Activated CD4-positive, alpha-beta memory T cell treated with anti-CD3 and anti-CD28 coated beads for 36 hours (primary cell): ENCODE measurements at regions of chr3 and their contacts with region 1.

Region 1: DNA sequence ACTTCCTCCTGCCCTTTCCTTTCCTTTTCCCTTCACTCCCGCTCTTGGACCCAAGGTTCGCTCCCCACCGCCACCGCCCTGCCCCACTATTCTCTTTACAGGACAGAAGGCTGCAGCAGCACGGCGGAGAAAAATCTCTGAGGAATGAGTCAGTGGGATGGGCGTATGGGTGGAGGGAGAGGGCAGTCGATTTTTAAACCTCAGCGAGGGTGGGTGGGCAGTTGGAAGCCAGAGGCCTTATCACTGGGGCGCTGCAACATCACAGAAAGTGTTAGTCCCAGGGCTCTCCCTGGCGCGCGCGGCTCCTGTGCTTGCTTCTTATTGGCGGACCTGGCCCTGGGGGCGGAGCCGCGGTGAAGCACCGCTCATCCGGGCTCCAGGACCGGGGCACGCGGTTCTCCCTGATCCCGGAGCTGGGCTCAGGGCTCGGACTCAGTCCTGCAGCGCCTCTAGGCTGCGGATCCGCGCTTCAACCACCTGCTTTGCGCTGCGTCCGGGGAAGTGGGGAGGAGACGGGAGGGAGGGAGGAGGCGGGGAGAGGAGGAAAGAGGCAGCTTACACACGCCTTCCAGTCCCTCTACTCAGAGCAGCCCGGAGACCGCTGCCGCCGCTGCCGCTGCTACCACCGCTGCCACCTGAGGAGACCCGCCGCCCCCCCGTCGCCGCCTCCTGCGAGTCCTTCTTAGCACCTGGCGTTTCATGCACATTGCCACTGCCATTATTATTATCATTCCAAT is at the start of gene ALCAM:
- DNase-seq: peak; percentile 91
- H3K4me3 Mint-ChIP-seq: peak within 1 kb of the TSS; percentile 84
- H3K27ac Mint-ChIP-seq: peak within 1 kb of the TSS; percentile 97
- H3K4me1 Mint-ChIP-seq: peaks cover 28% of the 10 kb centered on the region
- H3K27me3 Mint-ChIP-seq: peaks cover 24% of the 10 kb centered on the region
- total RNA-seq, gene ALCAM: 20.3 to 20.6 TPM

Region 2: GRCh38 chr3:104564045-104564643 is 802.4 kb before region 1 on chr3:
- CTCF ChIA-PET with region 1: no interaction called
- POLR2A ChIA-PET with region 1: no interaction called
- intact Hi-C with region 1: loop called (anchors 1 kb)
- DNase-seq: peak; percentile 70
- H3K4me3 Mint-ChIP-seq: no peak overlapping the region
- H3K27ac Mint-ChIP-seq: no peak overlapping the region
- H3K4me1 Mint-ChIP-seq: no peaks in the 10 kb centered on the region
- H3K27me3 Mint-ChIP-seq: peaks cover 2% of the 10 kb centered on the region

Region 3: DNA sequence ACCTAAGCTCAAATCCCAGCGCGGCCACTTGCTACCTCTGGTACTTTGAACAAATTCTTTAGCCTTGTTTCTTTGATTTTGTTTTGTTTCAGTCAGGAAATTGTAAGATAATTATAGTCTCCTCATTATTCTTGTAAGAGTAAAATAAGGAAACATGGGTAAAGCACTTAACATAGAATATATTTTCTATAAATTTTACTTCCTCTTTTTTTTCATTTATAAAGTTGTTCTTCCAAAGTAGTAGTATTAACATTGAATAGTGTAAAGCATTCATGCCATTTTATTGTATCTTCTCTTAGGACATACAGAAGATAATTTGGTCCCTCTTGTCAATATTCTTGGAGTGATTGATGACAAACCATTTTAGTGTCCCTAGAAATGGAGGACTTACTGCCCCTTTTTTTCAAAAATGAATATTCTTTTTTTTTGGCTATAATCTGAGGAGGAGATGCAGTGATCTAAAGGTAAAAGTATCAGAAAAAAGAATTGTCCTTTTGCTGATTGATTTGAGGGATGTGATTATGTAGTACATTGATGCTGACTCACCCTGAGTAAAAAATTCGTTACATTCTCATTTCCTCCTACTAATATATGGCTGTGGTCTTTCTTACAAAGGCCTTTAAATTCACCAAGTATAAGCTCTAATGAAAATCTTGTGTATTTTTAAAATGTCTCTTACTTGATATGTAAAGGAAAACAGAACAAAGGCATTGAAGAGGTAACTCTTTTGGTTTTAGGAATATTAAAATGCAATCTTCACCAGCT is 51.2 kb after region 1 on chr3:
- CTCF ChIA-PET with region 1: no interaction called
- POLR2A ChIA-PET with region 1: no interaction called
- intact Hi-C with region 1: no loop called
- DNase-seq: no peak
- H3K4me3 Mint-ChIP-seq: no peak overlapping the region
- H3K27ac Mint-ChIP-seq: no peak overlapping the region
- H3K4me1 Mint-ChIP-seq: no peaks in the 10 kb centered on the region
- H3K27me3 Mint-ChIP-seq: no peaks in the 10 kb centered on the region

Region 4: DNA sequence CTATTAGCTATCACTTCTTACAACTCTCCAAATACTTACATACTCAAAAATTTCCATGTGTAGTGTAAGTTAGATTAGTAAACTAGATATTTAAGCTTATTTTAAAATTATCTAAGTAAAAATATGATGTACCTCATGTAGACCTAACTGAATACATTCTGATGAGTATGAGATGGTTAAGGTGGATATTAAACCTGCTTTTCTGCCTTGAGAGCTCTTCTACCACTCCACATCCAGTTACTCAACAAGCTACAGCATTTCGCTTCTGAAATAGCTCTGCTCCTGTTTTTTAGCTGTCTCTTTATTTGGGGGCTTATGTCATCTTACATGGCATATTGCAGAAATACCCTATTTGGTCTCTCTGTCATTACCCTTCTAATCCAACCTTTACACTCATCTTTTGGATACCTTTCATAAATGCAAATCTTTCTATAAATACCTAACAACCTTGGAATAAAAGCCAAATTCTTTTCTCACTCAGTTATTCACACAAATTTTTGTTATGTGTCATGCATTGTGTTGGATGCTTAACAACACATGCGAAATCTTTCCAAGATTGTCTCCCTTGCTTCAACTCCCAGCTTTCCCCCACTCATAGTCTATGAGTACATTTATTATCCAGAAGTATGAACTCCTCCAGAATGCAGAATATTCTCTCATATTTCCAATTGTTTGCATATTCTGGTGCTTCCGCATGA is 92.2 kb after region 1 on chr3:
- CTCF ChIA-PET with region 1: no interaction called
- POLR2A ChIA-PET with region 1: no interaction called
- intact Hi-C with region 1: no loop called
- DNase-seq: no peak
- H3K4me3 Mint-ChIP-seq: no peak overlapping the region
- H3K27ac Mint-ChIP-seq: no peak overlapping the region
- H3K4me1 Mint-ChIP-seq: no peaks in the 10 kb centered on the region
- H3K27me3 Mint-ChIP-seq: no peaks in the 10 kb centered on the region

Region 5: DNA sequence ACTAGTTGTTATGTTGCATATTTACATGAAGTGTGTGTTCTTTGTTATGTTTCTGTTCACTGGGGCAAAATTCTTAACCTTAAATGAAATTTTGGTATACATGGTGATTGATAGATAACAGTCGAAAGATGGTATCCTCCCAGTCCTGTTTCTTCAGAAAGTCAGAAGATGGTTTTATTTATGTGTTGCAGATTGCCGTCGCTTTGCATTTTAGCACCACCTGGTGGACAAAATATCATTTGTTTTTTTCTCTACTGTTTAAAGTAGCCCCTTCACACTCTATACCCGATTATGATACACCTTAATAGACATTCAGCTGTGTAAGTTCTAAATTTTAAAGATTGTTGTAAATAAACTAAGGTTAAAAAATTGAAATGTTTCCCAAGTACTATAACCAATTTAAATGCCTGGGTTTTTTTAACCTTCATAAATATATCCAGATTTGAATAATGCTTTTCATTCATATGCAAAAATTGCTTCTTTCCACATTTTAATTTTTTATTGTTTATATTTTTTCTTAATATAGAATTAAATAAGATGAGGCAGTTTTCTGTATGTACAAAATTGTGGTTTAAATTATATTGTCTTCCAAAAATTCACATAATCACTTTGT is 152.4 kb after region 1 on chr3:
- CTCF ChIA-PET with region 1: interaction called, 4 read pairs
- POLR2A ChIA-PET with region 1: no interaction called
- intact Hi-C with region 1: loop called (anchors 2 kb)
- DNase-seq: peak; percentile 18
- H3K4me3 Mint-ChIP-seq: no peak overlapping the region
- H3K27ac Mint-ChIP-seq: no peak overlapping the region
- H3K4me1 Mint-ChIP-seq: peaks cover 3% of the 10 kb centered on the region
- H3K27me3 Mint-ChIP-seq: no peaks in the 10 kb centered on the region

Region 6: GRCh38 chr3:105868742-105869530 is 502.4 kb after region 1 on chr3 and contains the start of gene CBLB:
- CTCF ChIA-PET with region 1: no interaction called
- POLR2A ChIA-PET with region 1: no interaction called
- intact Hi-C with region 1: loop called (anchors 1 kb)
- DNase-seq: peak; percentile 91
- H3K4me3 Mint-ChIP-seq: peak within 1 kb of the TSS; percentile 94
- H3K27ac Mint-ChIP-seq: peak within 1 kb of the TSS; percentile 94
- H3K4me1 Mint-ChIP-seq: peaks cover 38% of the 10 kb centered on the region
- H3K27me3 Mint-ChIP-seq: no peaks in the 10 kb centered on the region
- total RNA-seq, gene CBLB: 86.1 to 88.2 TPM

Region 7: GRCh38 chr3:106206146-106206545 is 839.7 kb after region 1 on chr3:
- CTCF ChIA-PET with region 1: no interaction called
- POLR2A ChIA-PET with region 1: no interaction called
- intact Hi-C with region 1: loop called (anchors 1 kb)
- DNase-seq: peak; percentile 24
- H3K4me3 Mint-ChIP-seq: peak overlapping the region; percentile 9
- H3K27ac Mint-ChIP-seq: peak overlapping the region; percentile 93
- H3K4me1 Mint-ChIP-seq: peaks cover 48% of the 10 kb centered on the region
- H3K27me3 Mint-ChIP-seq: no peaks in the 10 kb centered on the region

Region 8: DNA sequence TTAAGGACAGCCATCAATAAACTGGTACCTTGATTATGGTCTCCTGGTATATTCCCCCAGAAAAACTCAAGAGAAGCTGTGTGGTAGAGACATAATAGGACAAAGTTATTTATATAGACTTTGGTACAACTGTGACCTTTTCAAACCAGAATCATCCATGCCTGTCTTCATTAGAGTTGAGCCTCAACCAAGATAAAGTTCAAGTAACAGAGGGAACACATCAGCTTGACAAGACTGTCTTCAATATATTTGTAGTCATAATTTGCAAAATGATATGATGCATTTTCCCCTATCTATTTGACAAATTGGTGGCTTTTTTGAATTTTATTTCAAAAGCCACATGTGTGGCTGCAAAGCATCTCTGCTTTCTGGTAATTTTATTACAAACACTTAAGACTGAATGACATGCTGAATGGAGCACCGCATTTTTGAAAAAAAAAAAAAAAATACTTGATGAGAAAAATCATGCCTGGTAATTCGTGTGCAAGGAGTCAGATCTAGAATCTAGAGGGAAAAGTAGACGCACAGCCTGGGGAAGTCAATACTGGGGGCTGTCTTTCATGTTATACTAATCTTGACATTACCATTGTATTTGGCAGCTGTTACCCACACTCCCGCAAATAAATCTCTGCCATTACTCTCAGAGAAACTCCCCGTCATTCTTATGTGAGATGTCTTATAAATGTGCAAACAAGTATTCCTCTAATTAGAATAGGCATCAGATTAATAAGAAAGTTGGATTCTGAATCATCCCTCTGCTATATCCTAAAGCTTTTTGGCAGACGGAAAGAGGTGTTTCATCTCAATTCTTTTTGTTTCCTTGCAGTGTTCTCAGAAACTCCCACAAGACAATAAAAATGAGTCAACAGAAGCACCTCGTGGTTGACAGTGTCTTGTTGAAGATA is 1057.1 kb after region 1 on chr3:
- CTCF ChIA-PET with region 1: no interaction called
- POLR2A ChIA-PET with region 1: interaction called, 4 read pairs
- intact Hi-C with region 1: loop called (anchors 1 kb)
- DNase-seq: peak; percentile 59
- H3K4me3 Mint-ChIP-seq: peak overlapping the region; percentile 18
- H3K27ac Mint-ChIP-seq: peak overlapping the region; percentile 94
- H3K4me1 Mint-ChIP-seq: peaks cover 54% of the 10 kb centered on the region
- H3K27me3 Mint-ChIP-seq: no peaks in the 10 kb centered on the region

Region 9: DNA sequence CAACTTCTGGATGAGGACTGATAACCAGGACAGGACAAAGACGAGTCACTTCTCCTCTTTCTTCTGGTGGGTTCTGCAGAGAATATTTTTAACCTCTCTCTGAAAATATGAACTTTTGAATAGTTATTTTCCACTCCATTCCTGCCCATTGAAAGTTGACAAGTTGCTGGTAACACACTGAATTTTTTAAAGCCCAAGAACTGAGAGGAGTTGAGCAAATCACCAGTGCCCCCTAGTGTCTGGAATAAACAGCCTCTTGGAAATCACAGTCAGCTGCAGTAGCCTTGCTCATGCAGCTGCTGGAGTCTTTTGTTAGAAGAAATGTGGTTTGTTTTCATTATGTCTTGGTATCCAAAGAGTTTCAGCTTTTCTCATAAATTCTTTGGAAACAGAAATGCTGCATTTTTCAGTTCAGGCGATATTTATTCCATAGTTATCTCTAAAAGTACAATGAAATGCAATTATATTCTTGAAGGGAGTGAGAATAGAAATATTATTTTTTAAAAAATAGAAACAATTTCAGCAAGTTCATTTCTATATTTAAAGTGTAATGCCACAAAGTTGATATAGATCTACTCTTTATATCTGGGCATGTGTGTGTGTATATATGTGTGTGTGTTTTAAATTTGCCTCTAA is 1243.3 kb after region 1 on chr3:
- CTCF ChIA-PET with region 1: no interaction called
- POLR2A ChIA-PET with region 1: no interaction called
- intact Hi-C with region 1: loop called (anchors 1 kb)
- DNase-seq: peak; percentile 76
- H3K4me3 Mint-ChIP-seq: no peak overlapping the region
- H3K27ac Mint-ChIP-seq: peak overlapping the region; percentile 67
- H3K4me1 Mint-ChIP-seq: peaks cover 23% of the 10 kb centered on the region
- H3K27me3 Mint-ChIP-seq: no peaks in the 10 kb centered on the region